ENCODE measurements at regions of chr11 and their contacts with region 1.

Region 1: GRCh38 chr11:68297812-68298658 is 14.4 kb upstream of the LRP5 start:
- DNase-seq: peak; percentile 89
- ATAC-seq: peak; percentile 96

Region 2: GRCh38 chr11:68257475-68258362 is 40.3 kb before region 1 on chr11:
- intact Hi-C with region 1: loop called (anchors 1 kb)
- DNase-seq: peak; percentile 98
- ATAC-seq: peak; percentile 84

Region 3: DNA sequence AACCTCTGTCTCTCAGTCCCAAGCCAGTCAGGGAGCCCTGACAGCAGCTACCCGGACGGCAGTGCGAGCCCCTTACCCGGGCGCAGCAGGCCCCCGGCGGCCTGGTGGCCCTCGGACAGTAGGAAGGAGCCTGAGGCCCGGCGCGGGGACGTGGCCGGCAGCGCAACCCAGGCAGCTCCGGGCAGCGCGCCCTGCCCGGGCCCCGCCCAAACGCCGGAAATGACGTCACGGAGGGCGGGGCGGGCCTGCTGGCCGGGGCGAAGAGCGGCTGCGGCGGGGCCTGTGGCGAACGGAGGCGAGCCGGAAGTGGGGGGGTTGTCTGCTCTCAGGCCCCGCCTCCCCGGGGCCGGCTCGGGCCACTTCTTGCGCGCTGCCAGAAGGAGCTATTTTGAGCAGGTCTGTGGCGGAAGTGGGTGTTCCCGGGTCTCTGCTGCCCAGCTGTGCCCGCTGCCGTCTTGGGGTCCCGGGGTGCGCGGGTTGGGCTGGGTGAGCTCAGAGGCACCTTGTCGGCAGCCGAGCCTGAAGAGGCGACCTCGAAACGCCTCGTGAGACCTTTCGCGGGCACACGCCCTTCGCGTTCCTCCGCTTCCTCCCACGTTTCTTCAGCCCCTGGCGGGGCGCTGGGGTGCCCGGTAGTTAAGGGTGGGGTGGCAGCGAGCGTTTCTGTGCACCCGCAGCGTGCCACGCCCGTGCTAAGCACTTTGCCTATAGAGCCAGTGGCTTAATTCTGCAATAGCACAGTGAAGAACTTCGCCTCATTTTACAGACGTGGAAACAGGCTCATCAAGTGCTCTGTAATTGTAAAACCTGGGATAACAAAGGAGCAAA is 26.0 kb before region 1 on chr11 and contains the start of gene C11orf24:
- intact Hi-C with region 1: loop called (anchors 2 kb)
- DNase-seq: peak; percentile 98
- ATAC-seq: peak; percentile 97
- total RNA-seq, gene C11orf24: 29.4 TPM

Region 4: GRCh38 chr11:68447015-68447801 is 149.2 kb after region 1 on chr11:
- intact Hi-C with region 1: loop called (anchors 1 kb)
- DNase-seq: peak; percentile 87
- ATAC-seq: peak; percentile 91

Measured in Right ventricle myocardium inferior (tissue), 1 donor.